Right ventricle myocardium inferior (tissue), 1 donor: ENCODE measurements at regions of chr17 and their contacts with region 1.

Region 1: DNA sequence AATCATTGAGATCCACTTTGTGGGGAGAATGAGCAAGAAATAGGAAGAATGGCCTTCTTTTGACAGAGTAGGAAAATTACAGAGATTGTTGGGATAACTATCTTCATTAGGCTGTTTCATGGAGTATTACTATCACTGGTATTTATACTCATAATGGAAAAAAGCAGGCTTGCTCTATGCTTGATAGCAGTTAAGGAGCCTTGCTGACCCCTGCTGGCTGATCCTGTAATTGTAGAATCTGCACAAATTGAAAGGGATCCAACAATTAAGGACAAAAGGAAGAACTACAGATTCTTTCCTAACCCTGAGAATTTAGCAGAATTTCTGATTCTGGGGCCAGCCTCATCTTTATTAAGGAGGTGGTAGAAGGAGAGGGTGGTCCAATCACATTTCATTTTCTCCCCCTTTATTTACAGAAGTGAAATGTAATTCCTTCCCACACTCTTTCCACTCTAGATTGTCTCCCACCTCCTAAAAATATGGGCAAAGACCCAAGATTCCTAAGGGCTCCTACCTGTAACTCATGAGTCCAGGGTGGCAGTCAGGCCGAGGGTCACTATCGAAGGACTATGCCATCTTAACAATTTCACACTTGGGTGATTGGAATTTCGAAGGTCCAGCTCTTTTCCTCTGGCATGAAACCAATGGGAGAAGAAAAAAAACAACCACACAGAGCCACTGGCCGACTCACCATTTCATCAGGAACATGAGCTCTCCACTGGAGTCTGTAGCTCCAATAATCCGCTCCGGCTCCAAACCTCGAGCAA is 26.3 kb downstream of the NFE2L1 start:
- DNase-seq: no peak
- ATAC-seq: peak; percentile 73

Region 2: DNA sequence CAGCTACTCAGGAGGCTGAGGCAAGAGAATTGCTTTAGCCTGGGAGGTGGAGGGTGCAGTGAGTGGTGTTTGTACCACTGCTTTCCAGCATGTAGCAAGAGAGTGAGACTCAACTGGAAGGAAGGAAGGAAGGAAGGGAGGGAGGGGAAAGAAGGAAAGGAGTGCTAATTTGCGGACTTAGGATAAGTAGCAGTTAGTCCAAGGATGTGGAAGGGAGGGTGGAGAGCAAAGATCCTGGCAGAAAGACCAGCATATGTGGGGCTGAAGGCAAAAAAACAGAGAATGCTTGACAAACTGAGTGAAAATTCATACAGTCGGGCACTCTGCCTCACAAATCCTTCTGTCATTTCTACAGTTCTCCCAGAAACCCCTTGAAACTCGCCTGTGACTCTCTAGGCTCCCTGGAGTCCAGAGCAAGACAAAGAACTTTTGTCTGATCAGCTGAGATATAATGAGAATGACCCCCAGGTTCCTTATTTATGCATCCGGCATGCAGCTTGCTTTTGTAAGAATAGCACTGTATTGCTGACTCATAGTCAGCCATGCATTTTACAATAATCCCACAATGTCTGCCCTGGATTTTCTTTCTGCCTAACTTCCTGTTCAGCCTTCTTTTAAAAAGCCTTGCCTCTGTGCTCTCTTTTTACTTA is 72.1 kb before region 1 on chr17:
- intact Hi-C with region 1: no loop called
- DNase-seq: no peak
- ATAC-seq: peak; percentile 56

Region 3: DNA sequence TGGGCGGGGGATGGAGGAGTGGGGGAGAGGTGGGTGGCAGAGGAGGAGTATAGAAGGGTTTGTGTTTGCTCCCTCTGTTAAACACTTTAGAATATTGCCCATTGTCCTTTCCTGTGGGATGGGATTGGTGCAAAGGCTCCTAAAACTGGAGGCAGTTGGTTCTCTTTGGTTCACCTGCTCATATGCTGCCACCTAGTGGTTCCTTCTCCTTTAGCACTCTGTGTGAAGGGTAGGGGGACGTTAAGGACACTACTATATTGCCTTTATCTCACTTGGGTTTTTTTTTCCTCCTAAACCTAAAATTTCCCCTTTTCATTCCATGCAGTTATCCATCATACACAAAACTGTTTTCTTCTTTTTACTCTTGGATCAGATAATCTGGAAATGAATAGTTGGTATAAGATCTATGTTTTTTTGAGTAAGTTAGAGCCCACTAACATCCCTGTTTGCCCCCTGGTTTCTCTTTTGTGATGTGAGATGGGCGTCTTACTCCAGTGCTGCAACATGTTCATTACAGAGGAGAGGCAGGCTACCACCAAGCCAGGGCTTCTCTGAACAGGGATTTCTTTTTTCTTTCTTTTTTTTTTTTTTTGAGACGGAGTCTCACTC is 56.8 kb after region 1 on chr17:
- intact Hi-C with region 1: loop called (anchors 5 kb)
- DNase-seq: no peak
- ATAC-seq: peak; percentile 89